ENCODE measurements at regions of chr17 and their contacts with region 1.

Region 1: GRCh38 chr17:22374741-22375140 is 682.4 kb downstream of the KCNJ18 start:
- DNase-seq: no peak
- ATAC-seq: no peak
- H3K4me3 ChIP-seq: no peak overlapping the region
- H3K27ac ChIP-seq: no peak overlapping the region
- H3K4me1 ChIP-seq: no peaks in the 10 kb centered on the region
- H3K27me3 ChIP-seq: no peaks in the 10 kb centered on the region
- CTCF ChIP-seq: no peak
- EP300 ChIP-seq: no peak
- POLR2A ChIP-seq: no peak
- RAD21 ChIP-seq: no peak

Region 2: DNA sequence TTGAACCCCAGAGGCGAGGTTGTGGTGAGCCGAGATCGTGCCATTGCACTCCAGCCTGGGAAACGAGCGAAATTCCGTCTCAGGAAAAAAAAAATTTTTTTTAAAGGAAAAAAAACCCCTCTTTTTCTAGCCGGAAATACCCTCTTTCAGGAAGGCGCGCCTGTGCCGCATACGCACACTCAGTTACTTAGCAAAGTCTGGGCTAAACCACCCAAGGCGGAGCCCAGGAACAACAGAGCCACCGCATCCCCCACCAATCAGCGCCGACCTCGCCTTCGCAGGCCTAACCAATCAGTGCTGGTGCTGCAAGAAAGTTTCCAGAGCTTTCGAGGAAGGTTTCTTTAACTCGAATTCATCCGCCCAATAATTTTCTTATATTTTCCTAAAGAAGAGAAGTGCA is 172.0 kb before region 1 on chr17:
- CTCF ChIA-PET with region 1: no interaction called
- POLR2A ChIA-PET with region 1: no interaction called
- in situ Hi-C with region 1: loop called (anchors 25 kb)
- intact Hi-C with region 1: no loop called
- DNase-seq: no peak
- ATAC-seq: no peak; the same call in 2 of the 3 replicates
- H3K4me3 ChIP-seq: no peak overlapping the region
- H3K27ac ChIP-seq: no peak overlapping the region
- H3K4me1 ChIP-seq: no peaks in the 10 kb centered on the region
- H3K27me3 ChIP-seq: no peaks in the 10 kb centered on the region
- CTCF ChIP-seq: no peak
- EP300 ChIP-seq: no peak
- POLR2A ChIP-seq: no peak
- RAD21 ChIP-seq: no peak